Activated CD4-positive, alpha-beta T cell treated with anti-CD3 and anti-CD28 coated beads for 36 hours (primary cell): ENCODE measurements at regions of chr6 and their contacts with region 1.

Region 1: GRCh38 chr6:43496370-43497128 is 13.6 kb downstream of the LRRC73 start:
- DNase-seq: peak; percentile 46
- ATAC-seq: peak; percentile 45
- H3K4me3 Mint-ChIP-seq: no peak overlapping the region
- H3K27ac Mint-ChIP-seq: no peak overlapping the region
- H3K4me1 Mint-ChIP-seq: peaks cover 17% of the 10 kb centered on the region
- H3K27me3 Mint-ChIP-seq: no peaks in the 10 kb centered on the region

Region 2: GRCh38 chr6:43454696-43455530 is 41.6 kb before region 1 on chr6:
- CTCF ChIA-PET with region 1: interaction called, 6 read pairs
- POLR2A ChIA-PET with region 1: no interaction called
- intact Hi-C with region 1: loop called in 1 of 2 experiments (anchors 2 kb)
- DNase-seq: peak; percentile 46
- ATAC-seq: peak; percentile 67
- H3K4me3 Mint-ChIP-seq: peak overlapping the region; percentile 72
- H3K27ac Mint-ChIP-seq: no peak overlapping the region
- H3K4me1 Mint-ChIP-seq: peaks cover 15% of the 10 kb centered on the region
- H3K27me3 Mint-ChIP-seq: peaks cover 3% of the 10 kb centered on the region